Spleen (tissue), 13 donors: ENCODE measurements at regions of chr3 and their contacts with region 1.

Region 1: GRCh38 chr3:28924744-28925360 is 356.0 kb upstream of the RBMS3 start:
- DNase-seq: no peak
- H3K4me3 ChIP-seq: no peak overlapping the region
- H3K27ac ChIP-seq: no peak overlapping the region
- H3K4me1 ChIP-seq: no peaks in the 10 kb centered on the region
- H3K27me3 ChIP-seq: no peaks in the 10 kb centered on the region
- CTCF ChIP-seq: no peak
- POLR2A ChIP-seq: no peak

Region 2: DNA sequence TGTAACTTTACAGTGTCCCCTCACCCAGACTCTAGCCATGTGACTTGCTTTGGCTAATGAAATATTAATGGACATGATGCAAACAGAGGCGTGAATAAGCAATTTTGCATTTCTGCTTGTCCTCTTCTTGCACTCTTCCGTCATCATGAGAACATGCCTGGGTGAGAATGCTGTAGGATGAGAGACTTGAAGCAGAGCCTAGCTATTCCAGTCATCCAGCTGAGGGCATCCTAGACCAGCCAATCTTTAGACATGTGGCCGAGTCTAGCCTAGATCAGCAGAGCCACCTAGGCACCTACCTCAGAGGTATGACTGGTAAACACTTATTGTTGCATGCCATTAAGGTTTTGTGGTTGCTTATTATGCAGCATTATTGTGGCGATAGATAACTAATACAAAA is 125.8 kb before region 1 on chr3:
- intact Hi-C with region 1: no loop called
- DNase-seq: no peak
- H3K4me3 ChIP-seq: no peak overlapping the region
- H3K27ac ChIP-seq: no peak overlapping the region
- H3K4me1 ChIP-seq: no peaks in the 10 kb centered on the region
- H3K27me3 ChIP-seq: no peaks in the 10 kb centered on the region
- CTCF ChIP-seq: no peak
- POLR2A ChIP-seq: no peak

Region 3: DNA sequence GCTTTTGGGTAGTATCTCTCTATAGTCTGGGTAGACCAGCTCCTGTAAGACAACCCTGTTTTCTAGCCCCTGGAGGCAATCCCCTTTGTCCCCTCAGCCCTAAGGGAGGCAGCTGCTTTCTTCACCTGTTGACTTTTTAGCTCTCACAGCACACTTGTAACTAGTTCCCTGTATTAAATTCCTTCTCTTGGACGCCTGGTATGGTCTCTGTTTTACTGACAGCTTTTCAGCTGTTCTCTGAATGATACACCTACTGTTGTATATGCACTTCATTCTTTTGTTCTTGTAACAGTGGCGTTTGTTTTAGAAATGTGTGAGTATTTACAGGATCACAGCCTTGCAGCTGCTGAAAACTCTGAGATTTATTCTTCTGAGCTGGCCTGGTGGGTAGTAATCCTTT is 57.0 kb before region 1 on chr3:
- intact Hi-C with region 1: no loop called
- DNase-seq: no peak
- H3K4me3 ChIP-seq: no peak overlapping the region
- H3K27ac ChIP-seq: no peak overlapping the region
- H3K4me1 ChIP-seq: no peaks in the 10 kb centered on the region
- H3K27me3 ChIP-seq: no peaks in the 10 kb centered on the region
- CTCF ChIP-seq: no peak
- POLR2A ChIP-seq: no peak

Region 4: GRCh38 chr3:29764603-29765254 is 839.9 kb after region 1 on chr3:
- intact Hi-C with region 1: loop called (anchors 10 kb)
- DNase-seq: no peak
- H3K4me3 ChIP-seq: no peak overlapping the region
- H3K27ac ChIP-seq: no peak overlapping the region
- H3K4me1 ChIP-seq: peaks cover 0 to 12% (median 1%) of the 10 kb centered on the region in 6 donors
- H3K27me3 ChIP-seq: no peaks in the 10 kb centered on the region
- CTCF ChIP-seq: peak in 9 of 11 experiments; percentile 21 to 46 (median 37)
- POLR2A ChIP-seq: no peak